Pancreas (tissue), 10 donors: ENCODE measurements at regions of chr5 and their contacts with region 1.

Region 1: DNA sequence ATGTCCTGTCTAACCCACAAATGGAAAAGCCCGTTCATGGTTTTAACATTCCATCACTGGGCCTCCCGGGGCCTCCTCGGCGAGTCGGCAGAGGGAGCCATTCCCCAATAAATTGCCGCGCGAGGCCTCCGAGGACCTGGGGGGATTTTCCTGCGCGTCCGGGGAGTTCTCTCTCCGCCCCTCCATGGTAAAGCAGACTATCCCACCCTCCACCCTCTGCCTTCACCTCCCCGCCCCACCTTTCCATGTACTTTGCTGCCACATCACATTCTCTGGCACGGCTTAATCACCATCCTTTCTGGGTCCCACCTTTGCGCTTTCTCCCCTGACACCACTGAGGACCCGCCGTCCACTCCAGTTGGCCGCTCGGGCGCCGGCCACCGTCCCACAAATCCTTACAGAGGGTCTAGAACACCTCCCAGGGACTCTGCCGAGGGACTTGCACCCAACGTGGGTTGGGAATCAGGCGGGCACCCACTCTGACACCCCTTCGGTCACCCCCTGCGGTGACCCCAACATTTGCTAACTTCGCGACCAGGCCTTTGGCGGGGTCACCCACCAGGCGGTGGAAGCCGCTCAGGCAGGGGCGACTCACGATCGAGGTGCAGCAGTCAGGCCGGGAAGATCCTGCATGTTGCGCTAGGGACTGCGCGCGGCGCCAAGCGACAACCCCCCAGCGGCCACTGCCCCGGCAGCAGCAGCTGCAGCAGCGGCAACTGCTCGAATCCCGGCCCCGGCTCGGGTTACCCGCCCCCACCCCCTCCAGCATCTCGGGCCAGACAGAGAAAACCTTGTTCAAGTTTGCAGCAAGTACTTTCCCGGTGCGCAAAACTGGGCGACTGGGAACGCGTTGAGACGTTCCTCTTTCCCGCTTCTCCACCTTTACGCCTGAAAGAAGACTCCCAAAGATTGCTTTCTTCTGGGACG is at the start of gene MEGF10:
- DNase-seq: peak in 5 of 6 donors; percentile 26 to 76 (median 44)
- ATAC-seq: peak; percentile 70 to 97 (median 91)
- H3K4me3 ChIP-seq: peak within 1 kb of the TSS in 3 of 4 donors; percentile 3 to 38 (median 8)
- H3K27ac ChIP-seq: no peak within 1 kb of the TSS
- H3K4me1 ChIP-seq: peaks cover 0 to 4% (median 0%) of the 10 kb centered on the region in 3 donors
- H3K27me3 ChIP-seq: peaks cover 0 to 7% (median 3%) of the 10 kb centered on the region in 4 donors
- CTCF ChIP-seq: peak; percentile 17 to 52 (median 40)
- total RNA-seq, gene MEGF10: 0.03 to 0.59 (median 0.10) TPM

Region 2: DNA sequence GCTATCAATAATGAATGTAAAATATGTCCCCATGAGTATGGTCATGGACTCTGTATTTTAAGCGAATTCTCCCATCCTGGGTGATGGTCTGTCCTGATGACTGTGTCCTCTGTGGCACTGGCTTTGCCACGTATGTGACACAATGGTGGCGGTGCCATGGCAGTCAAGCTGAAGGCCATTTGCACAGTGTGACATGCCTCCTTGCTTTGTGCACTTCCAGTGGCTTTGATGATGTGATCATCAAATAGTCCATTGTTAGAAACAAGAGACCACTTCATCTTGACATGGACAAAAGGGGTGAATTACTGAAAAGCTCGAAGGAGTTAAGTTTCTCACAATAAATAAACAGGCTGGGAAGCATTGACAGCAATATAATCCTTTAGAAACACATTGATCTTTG is 196.2 kb after region 1 on chr5:
- intact Hi-C with region 1: loop called in 1 of 3 experiments (anchors 10 kb)
- DNase-seq: no peak
- ATAC-seq: no peak
- H3K4me3 ChIP-seq: no peak overlapping the region
- H3K27ac ChIP-seq: no peak overlapping the region
- H3K4me1 ChIP-seq: no peaks in the 10 kb centered on the region
- H3K27me3 ChIP-seq: no peaks in the 10 kb centered on the region
- CTCF ChIP-seq: no peak

Region 3: DNA sequence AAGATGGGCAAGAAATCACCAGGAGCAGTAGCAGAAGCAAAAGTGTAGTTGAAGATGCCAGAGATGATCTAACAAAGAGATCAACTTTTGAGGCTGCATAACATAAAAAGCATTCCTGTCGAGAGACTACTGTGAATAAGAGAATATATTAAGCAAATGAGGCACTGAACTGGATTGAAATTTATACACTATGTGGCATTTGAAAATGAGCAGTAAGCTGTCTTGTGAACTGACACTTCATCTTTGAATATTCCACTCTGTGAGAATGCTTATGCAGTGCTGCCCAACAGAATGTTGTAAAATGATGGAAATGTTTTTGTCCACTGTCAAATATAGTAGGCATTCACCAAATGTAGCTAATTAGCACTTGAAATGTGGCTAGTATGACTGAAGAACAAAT is 208.3 kb after region 1 on chr5:
- intact Hi-C with region 1: loop called in 1 of 3 experiments (anchors 5 kb)
- DNase-seq: no peak
- ATAC-seq: no peak
- H3K4me3 ChIP-seq: no peak overlapping the region
- H3K27ac ChIP-seq: no peak overlapping the region
- H3K4me1 ChIP-seq: no peaks in the 10 kb centered on the region
- H3K27me3 ChIP-seq: no peaks in the 10 kb centered on the region
- CTCF ChIP-seq: no peak

Region 4: GRCh38 chr5:128062172-128062746 is 772.0 kb after region 1 on chr5:
- intact Hi-C with region 1: no loop called
- DNase-seq: no peak
- ATAC-seq: peak in 2 of 4 donors; percentile 30 to 51
- H3K4me3 ChIP-seq: no peak overlapping the region
- H3K27ac ChIP-seq: peak overlapping the region in 2 of 4 donors; percentile 19 to 59
- H3K4me1 ChIP-seq: no peaks in the 10 kb centered on the region
- H3K27me3 ChIP-seq: no peaks in the 10 kb centered on the region
- CTCF ChIP-seq: no peak

Region 5: GRCh38 chr5:128228008-128228407 is 937.7 kb after region 1 on chr5:
- intact Hi-C with region 1: no loop called
- DNase-seq: no peak
- ATAC-seq: peak in 3 of 4 donors; percentile 14 to 62 (median 54)
- H3K4me3 ChIP-seq: no peak overlapping the region
- H3K27ac ChIP-seq: no peak overlapping the region
- H3K4me1 ChIP-seq: no peaks in the 10 kb centered on the region
- H3K27me3 ChIP-seq: no peaks in the 10 kb centered on the region
- CTCF ChIP-seq: no peak